ENCODE measurements at regions of chr6 and their contacts with region 1.

Region 1: DNA sequence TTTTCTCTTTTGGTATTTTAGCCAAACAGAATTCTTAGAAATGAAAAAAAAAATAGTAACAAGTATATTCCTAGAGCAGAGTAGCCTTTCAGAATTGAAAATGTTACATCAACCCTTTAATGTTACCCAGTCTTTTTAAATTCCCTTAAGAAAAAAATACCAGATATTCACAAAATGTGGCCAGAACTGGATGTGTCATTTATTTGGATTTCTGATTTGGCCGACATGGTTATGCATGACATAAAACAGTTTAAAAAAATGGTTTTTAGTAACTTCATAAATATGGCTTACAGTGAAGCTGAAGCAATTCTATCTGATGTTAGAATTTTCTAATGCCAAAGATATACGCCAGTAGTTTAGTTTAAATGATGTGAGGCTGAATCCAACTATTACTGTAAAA is 112.0 kb downstream of the ATXN1 start:
- DNase-seq: no peak
- ATAC-seq: no peak

Region 2: DNA sequence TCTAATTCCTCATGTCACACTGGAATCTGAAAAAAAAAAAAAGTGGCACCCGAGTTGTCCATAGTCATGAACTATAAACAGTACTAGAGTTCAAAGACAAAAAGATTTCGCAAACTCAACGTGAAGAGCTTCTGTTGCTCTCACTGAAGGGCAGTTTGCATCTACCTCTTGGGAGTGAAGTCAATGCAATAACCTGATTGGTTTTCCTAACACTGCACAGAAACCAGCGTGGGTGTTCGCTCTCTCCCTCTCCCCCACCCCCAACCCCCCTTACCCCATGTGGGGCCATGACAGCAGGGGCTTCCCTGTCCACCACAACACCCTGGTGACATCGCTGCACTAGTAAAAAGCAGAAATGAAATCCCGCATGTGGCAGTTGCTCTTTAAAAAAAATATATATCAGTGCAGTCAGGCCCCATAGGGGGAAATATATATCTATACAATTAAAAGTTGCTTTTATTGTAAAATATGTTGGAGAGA is 344.0 kb before region 1 on chr6:
- intact Hi-C with region 1: no loop called
- DNase-seq: no peak
- ATAC-seq: no peak

Region 3: DNA sequence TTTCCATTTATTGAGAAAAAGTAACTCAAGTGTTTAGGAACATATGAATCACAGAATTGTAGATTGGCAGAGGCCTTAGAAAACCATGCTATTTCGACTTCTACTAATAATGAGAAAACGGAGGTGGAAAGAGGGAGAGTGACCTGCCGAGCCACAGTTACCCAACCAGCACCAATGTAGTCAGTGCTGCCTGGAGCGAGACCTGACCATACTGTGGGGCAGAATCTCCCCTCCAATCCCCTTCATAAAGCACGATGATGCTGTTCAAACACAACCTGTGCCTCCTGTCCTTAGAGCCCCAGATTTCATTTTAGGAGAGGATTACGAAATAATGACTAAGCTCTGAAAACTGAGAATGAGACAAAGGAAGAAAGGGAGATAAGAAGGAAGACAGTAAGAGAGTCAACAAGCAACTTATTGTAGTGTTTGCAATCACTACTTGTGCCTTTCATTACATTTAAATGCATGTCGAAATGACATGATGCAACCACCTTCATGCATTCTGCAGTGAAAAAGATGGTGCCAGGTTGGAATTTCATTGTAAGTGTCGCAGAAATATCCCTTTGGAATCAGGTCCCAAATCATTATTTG is 41.5 kb after region 1 on chr6:
- intact Hi-C with region 1: loop called (anchors 2 kb)
- DNase-seq: no peak
- ATAC-seq: no peak